A673 (cell line): ENCODE measurements at regions of chr1 and their contacts with region 1.

Region 1: DNA sequence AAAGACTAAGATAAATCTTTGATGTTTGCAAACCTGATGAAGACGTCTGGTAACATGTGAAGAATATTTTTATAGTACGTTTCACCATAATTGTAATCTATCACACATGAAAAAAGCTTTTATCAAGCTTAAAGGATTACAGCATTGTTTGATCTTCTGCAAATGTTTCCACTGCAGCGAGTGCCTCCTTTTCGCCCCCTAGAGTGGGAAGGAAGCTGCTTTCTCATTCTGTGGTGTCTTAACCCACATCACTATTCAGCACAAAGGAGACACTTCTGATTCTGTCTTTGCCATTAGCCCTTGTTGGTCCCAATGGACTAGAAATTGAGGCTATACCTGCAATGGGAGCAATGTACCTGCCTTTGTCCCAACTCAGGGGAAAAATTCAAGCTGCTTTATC is 46.0 kb upstream of the IL12RB2 start:
- DNase-seq: peak; percentile 36
- H3K4me3 ChIP-seq: no peak overlapping the region
- H3K27ac ChIP-seq: no peak overlapping the region
- H3K4me1 ChIP-seq: peaks cover 15% of the 10 kb centered on the region
- H3K27me3 ChIP-seq: no peaks in the 10 kb centered on the region
- CTCF ChIP-seq: peak; percentile 54

Region 2: GRCh38 chr1:67673468-67674201 is 412.0 kb after region 1 on chr1:
- CTCF ChIA-PET with region 1: no interaction called
- POLR2A ChIA-PET with region 1: interaction called, 13 read pairs
- intact Hi-C with region 1: no loop called
- DNase-seq: no peak
- H3K4me3 ChIP-seq: no peak overlapping the region
- H3K27ac ChIP-seq: no peak overlapping the region
- H3K4me1 ChIP-seq: peaks cover 15% of the 10 kb centered on the region
- H3K27me3 ChIP-seq: no peaks in the 10 kb centered on the region
- CTCF ChIP-seq: no peak

Region 3: GRCh38 chr1:68028566-68028965 is 766.9 kb after region 1 on chr1:
- CTCF ChIA-PET with region 1: no interaction called
- POLR2A ChIA-PET with region 1: no interaction called
- intact Hi-C with region 1: no loop called
- DNase-seq: no peak
- H3K4me3 ChIP-seq: no peak overlapping the region
- H3K27ac ChIP-seq: no peak overlapping the region
- H3K4me1 ChIP-seq: no peaks in the 10 kb centered on the region
- H3K27me3 ChIP-seq: no peaks in the 10 kb centered on the region
- CTCF ChIP-seq: no peak